ENCODE measurements at regions of chr9 and their contacts with region 1.

Region 1: DNA sequence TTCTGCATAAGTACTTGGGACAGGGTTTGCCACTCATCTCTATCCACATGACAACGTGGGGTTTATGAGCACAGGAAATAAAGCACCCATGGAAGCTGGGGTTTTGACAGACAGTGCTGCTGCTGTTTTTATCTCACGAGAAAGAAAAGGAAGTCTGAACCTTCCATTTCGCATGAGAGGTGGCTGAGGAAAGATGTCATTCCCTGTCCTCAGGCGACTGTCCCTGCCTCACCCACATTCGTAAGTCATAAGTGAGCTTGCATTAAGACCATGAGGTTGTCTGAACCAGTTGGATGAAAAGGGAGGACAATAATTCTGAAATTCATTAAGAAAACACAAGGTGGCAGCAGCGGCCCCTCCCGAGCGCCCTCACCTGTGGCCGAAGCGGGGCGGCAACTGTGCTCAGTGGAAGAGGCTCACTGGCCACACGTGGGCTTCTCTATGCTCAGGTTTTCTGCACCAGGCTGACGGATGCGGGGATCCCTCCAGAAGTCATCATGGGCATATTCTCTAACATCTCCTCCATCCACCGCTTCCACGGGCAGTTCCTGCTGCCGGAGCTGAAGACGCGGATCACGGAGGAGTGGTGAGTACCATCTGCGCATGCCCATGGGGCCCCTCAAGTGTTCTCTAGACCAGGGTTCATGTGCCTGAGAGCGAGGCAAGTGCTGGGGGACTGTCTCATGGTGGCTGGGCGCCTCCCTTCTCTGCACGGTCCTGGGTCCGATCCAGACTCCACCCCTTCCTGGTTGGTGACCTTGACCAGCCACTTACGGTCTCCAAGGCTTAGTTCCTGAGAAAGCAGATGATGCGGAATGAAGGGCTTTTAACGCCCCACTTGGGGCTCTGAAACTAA is 54.7 kb upstream of the SUSD3 start:
- DNase-seq: peak; percentile 79
- ATAC-seq: peak; percentile 93
- H3K4me3 Mint-ChIP-seq: no peak overlapping the region
- H3K27ac Mint-ChIP-seq: peak overlapping the region; percentile 92
- H3K4me1 Mint-ChIP-seq: peaks cover 49% of the 10 kb centered on the region
- H3K27me3 Mint-ChIP-seq: no peaks in the 10 kb centered on the region
- CTCF ChIP-seq: peak; percentile 88

Region 2: GRCh38 chr9:92920437-92920836 is 83.3 kb before region 1 on chr9:
- CTCF ChIA-PET with region 1: no interaction called
- POLR2A ChIA-PET with region 1: no interaction called
- intact Hi-C with region 1: no loop called
- DNase-seq: no peak
- ATAC-seq: no peak
- H3K4me3 Mint-ChIP-seq: no peak overlapping the region
- H3K27ac Mint-ChIP-seq: no peak overlapping the region
- H3K4me1 Mint-ChIP-seq: no peaks in the 10 kb centered on the region
- H3K27me3 Mint-ChIP-seq: no peaks in the 10 kb centered on the region
- CTCF ChIP-seq: no peak

Region 3: DNA sequence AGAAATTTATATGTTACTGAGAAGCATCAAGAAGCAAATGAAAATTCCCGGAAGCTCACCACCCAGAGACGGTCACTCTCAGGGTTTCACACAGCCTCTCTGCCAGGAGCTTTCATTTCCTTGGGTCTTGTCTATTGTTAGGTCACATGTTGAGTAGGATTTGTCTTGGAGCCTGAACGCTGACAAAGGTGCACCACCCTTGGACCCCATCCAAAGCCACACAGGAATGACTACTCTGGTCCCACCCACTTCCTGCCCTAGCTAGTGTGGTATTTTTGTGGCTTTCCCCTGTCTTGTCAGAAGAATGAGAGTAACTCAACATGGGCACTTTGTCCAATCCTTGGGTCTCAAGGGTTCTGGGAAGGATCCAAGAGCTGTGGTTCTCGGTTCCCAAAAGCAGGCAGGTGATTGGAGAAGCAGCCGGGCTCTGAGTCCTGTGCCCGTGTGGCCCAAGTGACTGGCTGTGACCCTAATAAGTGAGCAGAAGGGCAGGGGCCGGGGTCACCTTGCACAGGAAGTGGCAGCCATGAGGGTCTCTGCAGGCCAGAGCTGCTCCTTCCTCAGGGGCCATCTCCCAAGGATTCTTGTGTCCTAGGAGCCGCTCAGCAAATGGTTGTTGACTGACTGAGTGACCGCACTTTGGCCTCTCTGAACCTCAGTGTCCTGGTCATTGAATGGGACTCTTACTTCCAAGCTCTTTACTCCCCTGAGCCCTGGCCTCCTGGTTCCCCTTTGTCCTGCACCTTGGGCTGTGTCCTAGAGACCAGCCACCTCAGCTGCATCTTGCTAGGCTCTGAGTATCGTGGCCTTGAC is 49.5 kb before region 1 on chr9:
- CTCF ChIA-PET with region 1: interaction called, 22 read pairs
- POLR2A ChIA-PET with region 1: interaction called, 4 read pairs
- intact Hi-C with region 1: loop called (anchors 5 kb)
- DNase-seq: peak; percentile 93
- ATAC-seq: peak; percentile 90
- H3K4me3 Mint-ChIP-seq: peak overlapping the region; percentile 63
- H3K27ac Mint-ChIP-seq: peak overlapping the region; percentile 97
- H3K4me1 Mint-ChIP-seq: peaks cover 61% of the 10 kb centered on the region
- H3K27me3 Mint-ChIP-seq: no peaks in the 10 kb centered on the region
- CTCF ChIP-seq: no peak

Region 4: DNA sequence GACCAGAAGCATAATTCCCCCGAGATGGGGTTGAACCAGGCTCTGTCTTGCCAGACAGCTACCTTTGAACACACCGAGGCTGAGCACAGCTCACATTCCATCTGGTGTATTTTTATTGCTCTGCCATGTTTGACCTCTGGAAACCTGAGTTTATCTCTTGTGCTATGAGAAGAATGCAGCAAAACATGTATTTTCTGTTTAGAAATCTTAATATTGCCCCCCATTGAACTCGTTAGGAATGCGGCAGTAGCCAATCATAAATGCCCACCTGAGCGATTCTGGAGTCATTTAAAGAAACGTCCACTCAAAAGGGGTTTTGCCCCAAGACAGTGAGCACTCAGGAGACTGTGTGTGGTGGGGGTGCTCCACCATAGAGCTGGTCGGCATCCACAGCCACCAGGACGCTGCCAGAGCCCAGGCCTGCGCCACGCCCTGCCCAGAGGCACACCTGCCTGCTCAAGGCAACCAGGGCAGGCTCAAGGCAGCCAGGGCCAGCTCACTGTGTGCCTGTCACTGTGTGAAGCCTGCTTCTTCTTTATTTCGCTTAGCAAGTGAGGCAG is 29.5 kb before region 1 on chr9:
- CTCF ChIA-PET with region 1: interaction called, 19 read pairs
- POLR2A ChIA-PET with region 1: interaction called, 3 read pairs
- intact Hi-C with region 1: no loop called
- DNase-seq: no peak
- ATAC-seq: no peak
- H3K4me3 Mint-ChIP-seq: no peak overlapping the region
- H3K27ac Mint-ChIP-seq: peak overlapping the region; percentile 83
- H3K4me1 Mint-ChIP-seq: peaks cover 85% of the 10 kb centered on the region
- H3K27me3 Mint-ChIP-seq: no peaks in the 10 kb centered on the region
- CTCF ChIP-seq: no peak

Region 5: DNA sequence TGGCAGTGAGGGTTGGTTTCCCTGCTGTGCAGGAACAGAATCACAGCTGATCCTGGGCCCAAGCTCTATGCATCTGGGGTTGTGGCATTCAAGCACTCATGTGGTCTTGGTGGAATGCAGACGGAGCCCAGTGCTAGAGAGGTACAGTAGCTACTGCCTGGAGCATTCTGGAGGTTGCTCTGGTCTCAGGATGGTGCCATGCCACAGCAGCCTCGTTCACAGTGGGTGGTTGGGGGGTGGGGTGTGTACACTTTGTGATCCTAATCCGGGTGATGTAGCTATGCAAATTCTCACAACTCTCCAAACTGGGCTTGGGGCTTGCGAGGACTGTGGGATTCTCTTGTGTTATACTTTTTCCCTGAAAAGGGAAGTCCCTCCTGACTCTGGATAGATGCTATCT is 11.2 kb before region 1 on chr9:
- CTCF ChIA-PET with region 1: interaction called, 43 read pairs
- POLR2A ChIA-PET with region 1: interaction called, 4 read pairs
- intact Hi-C with region 1: no loop called
- DNase-seq: no peak
- ATAC-seq: no peak
- H3K4me3 Mint-ChIP-seq: no peak overlapping the region
- H3K27ac Mint-ChIP-seq: peak overlapping the region; percentile 79
- H3K4me1 Mint-ChIP-seq: peaks cover 90% of the 10 kb centered on the region
- H3K27me3 Mint-ChIP-seq: no peaks in the 10 kb centered on the region
- CTCF ChIP-seq: no peak

Region 6: GRCh38 chr9:93020771-93021670 is 17.2 kb after region 1 on chr9:
- CTCF ChIA-PET with region 1: interaction called, 75 read pairs
- POLR2A ChIA-PET with region 1: interaction called, 3 read pairs
- intact Hi-C with region 1: no loop called
- DNase-seq: peak; percentile 79
- ATAC-seq: peak; percentile 86
- H3K4me3 Mint-ChIP-seq: no peak overlapping the region
- H3K27ac Mint-ChIP-seq: peak overlapping the region; percentile 90
- H3K4me1 Mint-ChIP-seq: peaks cover 52% of the 10 kb centered on the region
- H3K27me3 Mint-ChIP-seq: no peaks in the 10 kb centered on the region
- CTCF ChIP-seq: no peak

Region 7: DNA sequence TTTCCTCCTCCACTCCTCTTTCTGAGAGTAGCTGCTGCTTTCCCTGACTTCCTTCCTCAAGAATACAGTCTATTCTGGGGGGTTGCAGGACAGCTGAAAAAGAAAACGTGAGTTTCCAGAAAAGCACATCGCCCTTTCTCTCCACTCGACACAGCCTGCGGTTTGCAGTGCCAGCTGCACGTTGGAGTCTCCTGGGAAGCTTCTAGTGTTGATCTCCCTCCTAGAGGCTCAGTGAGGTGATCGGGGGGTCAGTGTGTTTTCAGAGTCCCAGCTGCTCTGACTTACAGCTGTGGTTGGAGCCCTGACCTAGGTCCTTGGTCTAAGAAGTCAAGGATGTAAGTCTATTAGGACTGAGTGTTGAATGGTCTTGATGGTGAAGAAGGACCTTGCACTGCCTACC is 29.8 kb after region 1 on chr9:
- CTCF ChIA-PET with region 1: interaction called, 12 read pairs
- POLR2A ChIA-PET with region 1: interaction called, 4 read pairs
- intact Hi-C with region 1: no loop called
- DNase-seq: no peak
- ATAC-seq: no peak
- H3K4me3 Mint-ChIP-seq: no peak overlapping the region
- H3K27ac Mint-ChIP-seq: peak overlapping the region; percentile 79
- H3K4me1 Mint-ChIP-seq: peaks cover 51% of the 10 kb centered on the region
- H3K27me3 Mint-ChIP-seq: no peaks in the 10 kb centered on the region
- CTCF ChIP-seq: no peak

Region 8: GRCh38 chr9:93108291-93109041 is 104.7 kb after region 1 on chr9:
- CTCF ChIA-PET with region 1: interaction called, 26 read pairs
- POLR2A ChIA-PET with region 1: no interaction called
- intact Hi-C with region 1: no loop called
- DNase-seq: peak; percentile 66
- ATAC-seq: peak; percentile 80
- H3K4me3 Mint-ChIP-seq: no peak overlapping the region
- H3K27ac Mint-ChIP-seq: no peak overlapping the region
- H3K4me1 Mint-ChIP-seq: peaks cover 42% of the 10 kb centered on the region
- H3K27me3 Mint-ChIP-seq: no peaks in the 10 kb centered on the region
- CTCF ChIP-seq: no peak

Measured in activated CD8-positive, alpha-beta T cell treated with anti-CD3 and anti-CD28 coated beads for 36 hours (primary cell).